GM12878 (cell line): ENCODE measurements at regions of chr12 and their contacts with region 1.

Region 1: GRCh38 chr12:53213348-53213747 is 6.3 kb upstream of the ITGB7 start:
- DNase-seq: no peak
- ATAC-seq: peak; percentile 83
- H3K4me3 ChIP-seq: no peak overlapping the region
- H3K27ac ChIP-seq: no peak overlapping the region
- H3K4me1 ChIP-seq: peaks cover 27% of the 10 kb centered on the region
- H3K27me3 ChIP-seq: no peaks in the 10 kb centered on the region
- CTCF ChIP-seq: peak; percentile 89 to 96 (median 94)
- EP300 ChIP-seq: no peak
- POLR2A ChIP-seq: no peak
- RAD21 ChIP-seq: peak; percentile 96

Region 2: DNA sequence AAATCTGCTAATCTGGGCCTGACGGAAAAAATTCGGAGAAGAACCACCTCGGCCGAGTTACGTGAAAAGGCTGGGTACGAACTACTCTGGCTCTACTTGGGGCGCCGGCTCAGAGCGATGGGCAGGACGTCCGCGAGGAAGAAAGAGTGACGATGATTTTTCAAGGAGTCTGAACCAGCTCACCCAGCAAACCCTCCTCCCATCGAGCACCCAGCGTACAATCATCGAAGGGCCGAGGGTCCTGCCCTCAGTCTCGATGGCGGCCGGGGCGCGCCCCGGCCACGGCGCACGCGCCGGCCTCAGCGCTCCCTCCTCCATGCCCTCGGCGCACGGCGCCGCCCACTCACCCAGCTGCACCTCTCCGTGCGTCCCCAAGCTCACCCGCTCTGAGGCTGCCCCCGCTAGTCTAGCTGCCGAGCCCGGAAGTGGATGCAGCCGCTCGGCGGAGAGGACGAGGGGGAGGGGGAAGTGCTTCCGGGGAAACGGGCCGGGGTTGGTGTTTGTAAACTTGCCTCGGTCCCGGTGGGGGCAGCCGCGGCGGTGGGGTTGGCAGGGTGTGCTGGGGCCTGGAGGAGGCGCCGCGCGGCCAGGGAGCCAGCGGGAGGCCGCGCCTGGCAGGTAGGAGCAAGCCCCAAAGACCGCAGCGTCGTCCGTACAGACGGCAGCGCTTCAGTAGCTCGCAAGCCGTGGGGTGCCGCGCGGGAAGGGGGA is 33.0 kb before region 1 on chr12 and contains the starts of genes CSAD and ZNF740:
- CTCF ChIA-PET with region 1: interaction called, 32 read pairs
- POLR2A ChIA-PET with region 1: interaction called, 48 read pairs
- RAD21 ChIA-PET with region 1: interaction called, 31 read pairs
- SMC1A ChIA-PET with region 1: interaction called, 19 read pairs
- in situ Hi-C with region 1: no loop called
- intact Hi-C with region 1: no loop called
- DNase-seq: peak; percentile 91
- ATAC-seq: peak; percentile 96
- H3K4me3 ChIP-seq: peak within 1 kb of the TSS; percentile 78
- H3K27ac ChIP-seq: peak within 1 kb of the TSS; percentile 91
- H3K4me1 ChIP-seq: peaks cover 13% of the 10 kb centered on the region; the same call in 1 of the 2 replicates
- H3K27me3 ChIP-seq: no peaks in the 10 kb centered on the region
- CTCF ChIP-seq: peak in 2 of 3 experiments; percentile 2 to 12; a peak in 1 of 6 replicates
- EP300 ChIP-seq: no peak
- POLR2A ChIP-seq: peak; percentile 81
- RAD21 ChIP-seq: no peak
- polyA plus RNA-seq, gene CSAD: 1.2 to 2.0 TPM
- polyA plus RNA-seq, gene ZNF740: 1.4 to 1.8 TPM

Region 3: DNA sequence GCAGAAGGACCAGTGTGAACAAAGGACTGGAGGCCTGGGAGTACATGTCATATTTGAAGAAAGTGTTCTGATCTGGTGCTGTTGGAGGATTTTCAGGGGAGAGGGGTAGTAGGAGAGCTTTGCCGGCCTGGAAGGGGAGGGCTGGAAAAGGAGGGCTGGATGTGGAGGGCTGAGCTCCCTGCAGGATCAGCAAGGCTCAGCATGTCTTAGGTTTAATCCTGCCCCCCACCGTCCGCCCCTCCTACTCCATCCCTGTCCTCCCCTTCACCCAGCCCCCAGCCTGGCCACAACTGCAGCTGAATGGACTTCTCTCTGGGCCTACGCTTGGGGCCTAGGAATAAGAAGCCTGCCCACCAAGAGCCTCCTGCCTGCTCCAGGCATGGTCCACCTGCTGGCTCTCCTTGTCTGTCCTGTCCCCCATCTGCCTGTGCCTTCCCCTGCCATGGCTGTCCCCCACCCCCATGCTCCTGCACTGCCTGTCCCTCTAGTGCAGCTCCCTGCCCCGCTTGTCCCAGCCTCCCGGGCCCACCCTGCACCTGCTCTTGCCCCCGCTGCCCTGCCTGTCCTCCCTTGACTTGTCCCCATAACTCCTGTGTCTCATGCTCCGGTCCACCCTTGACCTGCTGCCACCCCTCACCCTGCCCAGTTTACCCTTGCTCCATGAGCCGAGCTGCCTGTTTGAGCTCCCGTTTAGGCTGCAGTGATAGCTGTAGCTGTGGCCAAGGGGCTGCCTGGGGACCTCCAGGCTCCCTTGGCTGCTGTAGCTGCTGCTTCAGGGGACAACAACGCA is 28.5 kb after region 1 on chr12:
- CTCF ChIA-PET with region 1: interaction called, 49 read pairs
- POLR2A ChIA-PET with region 1: interaction called, 3 read pairs
- RAD21 ChIA-PET with region 1: interaction called, 7 read pairs
- SMC1A ChIA-PET with region 1: interaction called, 12 read pairs
- in situ Hi-C with region 1: no loop called
- intact Hi-C with region 1: no loop called
- DNase-seq: no peak
- ATAC-seq: peak; percentile 27; the same call in 2 of the 3 replicates
- H3K4me3 ChIP-seq: no peak overlapping the region
- H3K27ac ChIP-seq: no peak overlapping the region
- H3K4me1 ChIP-seq: peaks cover 6% of the 10 kb centered on the region
- H3K27me3 ChIP-seq: peaks cover 0 to 5% of the 10 kb centered on the region in 2 experiments; a peak in 2 of 4 replicates
- CTCF ChIP-seq: no peak
- EP300 ChIP-seq: no peak
- POLR2A ChIP-seq: no peak
- RAD21 ChIP-seq: no peak

Region 4: DNA sequence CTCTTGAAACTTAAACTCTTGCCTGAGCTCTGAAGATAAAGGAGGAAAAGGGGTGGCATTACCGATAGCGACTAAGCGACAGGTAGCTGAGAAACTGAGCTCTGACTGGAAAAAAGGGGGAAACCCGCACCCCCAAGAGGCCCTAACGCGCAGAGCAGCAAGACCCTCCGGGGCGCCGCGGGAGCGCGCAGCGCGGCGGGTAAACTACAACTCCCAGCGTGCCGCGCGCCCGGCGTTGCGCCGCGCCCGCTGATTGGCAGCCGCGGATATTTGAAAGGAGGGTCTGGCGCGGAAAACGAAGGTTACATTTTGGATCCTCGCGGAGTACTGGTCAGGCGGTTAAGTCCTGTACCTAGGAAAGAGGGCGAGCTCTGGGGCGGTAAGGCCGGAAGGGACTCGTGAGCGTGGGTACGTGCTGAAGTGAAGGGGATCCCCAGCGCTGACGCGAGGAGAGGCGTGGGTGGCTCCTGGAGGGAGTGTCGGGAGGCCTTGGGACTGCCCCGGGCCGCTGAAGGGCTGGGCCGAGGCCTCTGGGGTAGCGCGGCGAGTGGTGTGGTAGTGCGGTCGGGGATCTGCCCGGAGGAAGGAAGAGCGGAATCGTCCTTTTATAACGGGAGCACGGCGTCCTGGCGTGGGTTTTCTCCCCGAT is 54.8 kb after region 1 on chr12 and contains the start of gene ESPL1:
- CTCF ChIA-PET with region 1: interaction called, 134 read pairs
- POLR2A ChIA-PET with region 1: interaction called, 26 read pairs
- RAD21 ChIA-PET with region 1: interaction called, 146 read pairs
- SMC1A ChIA-PET with region 1: interaction called, 155 read pairs
- in situ Hi-C with region 1: no loop called
- intact Hi-C with region 1: no loop called
- DNase-seq: peak; percentile 58
- ATAC-seq: peak; percentile 93
- H3K4me3 ChIP-seq: peak within 1 kb of the TSS; percentile 77
- H3K27ac ChIP-seq: peak within 1 kb of the TSS; percentile 89
- H3K4me1 ChIP-seq: peaks cover 14% of the 10 kb centered on the region
- H3K27me3 ChIP-seq: no peaks in the 10 kb centered on the region
- CTCF ChIP-seq: peak; percentile 26 to 37 (median 33); a peak in 4 of 6 replicates
- EP300 ChIP-seq: no peak
- POLR2A ChIP-seq: peak; percentile 75
- RAD21 ChIP-seq: peak; percentile 47
- polyA plus RNA-seq, gene ESPL1: 2.1 to 2.2 TPM

Region 5: GRCh38 chr12:53295070-53295890 is 81.9 kb after region 1 on chr12 and contains the start of gene PFDN5:
- CTCF ChIA-PET with region 1: interaction called, 315 read pairs
- POLR2A ChIA-PET with region 1: interaction called, 8 read pairs
- RAD21 ChIA-PET with region 1: interaction called, 102 read pairs
- SMC1A ChIA-PET with region 1: interaction called, 96 read pairs
- in situ Hi-C with region 1: no loop called
- intact Hi-C with region 1: no loop called
- DNase-seq: peak; percentile 73
- ATAC-seq: peak; percentile 95
- H3K4me3 ChIP-seq: peak within 1 kb of the TSS; percentile 82
- H3K27ac ChIP-seq: peak within 1 kb of the TSS; percentile 75
- H3K4me1 ChIP-seq: peaks cover 21% of the 10 kb centered on the region
- H3K27me3 ChIP-seq: no peaks in the 10 kb centered on the region
- CTCF ChIP-seq: peak in 1 of 3 experiments; percentile 8; a peak in 1 of 6 replicates
- EP300 ChIP-seq: 0 out of 4 replicates have a peak, but pooled peaks of 1 of the 2 experiments have one; percentile 27
- POLR2A ChIP-seq: peak; percentile 90
- RAD21 ChIP-seq: no peak
- polyA plus RNA-seq, gene PFDN5: 1,522 to 1,596 TPM

Region 6: GRCh38 chr12:53508534-53509199 is 295.3 kb after region 1 on chr12:
- CTCF ChIA-PET with region 1: no interaction called
- POLR2A ChIA-PET with region 1: no interaction called
- RAD21 ChIA-PET with region 1: interaction called, 5 read pairs
- SMC1A ChIA-PET with region 1: no interaction called
- in situ Hi-C with region 1: no loop called
- intact Hi-C with region 1: loop called (anchors 5 kb)
- DNase-seq: peak; percentile 60
- ATAC-seq: peak; percentile 99
- H3K4me3 ChIP-seq: no peak overlapping the region
- H3K27ac ChIP-seq: no peak overlapping the region
- H3K4me1 ChIP-seq: 0 out of 2 replicates have a peak, but pooled peaks cover 3% of the 10 kb centered on the region
- H3K27me3 ChIP-seq: no peaks in the 10 kb centered on the region
- CTCF ChIP-seq: peak; percentile 94 to 99 (median 96); a peak in 5 of 6 replicates
- EP300 ChIP-seq: no peak
- POLR2A ChIP-seq: no peak
- RAD21 ChIP-seq: peak; percentile 97